IMR-90 (cell line): ENCODE measurements at regions of chr12 and their contacts with region 1.

Region 1: GRCh38 chr12:6533923-6534694 is at the start of gene GAPDH:
- DNase-seq: peak; percentile 97
- ATAC-seq: peak; percentile 51
- H3K4me3 ChIP-seq: peak within 1 kb of the TSS; percentile 66
- H3K27ac ChIP-seq: peak within 1 kb of the TSS; percentile 94
- H3K4me1 ChIP-seq: peaks cover 12% of the 10 kb centered on the region
- H3K27me3 ChIP-seq: no peaks in the 10 kb centered on the region
- CTCF ChIP-seq: 0 out of 2 replicates have a peak, but pooled peaks have one; percentile 3
- POLR2A ChIP-seq: peak; percentile 100
- RAD21 ChIP-seq: no peak
- total RNA-seq, gene GAPDH: 11,536 and 12,939 TPM in 2 replicates

Region 2: GRCh38 chr12:5554711-5555110 is 979.4 kb before region 1 on chr12:
- CTCF ChIA-PET with region 1: no interaction called
- POLR2A ChIA-PET with region 1: no interaction called
- dilution Hi-C with region 1: no loop called
- in situ Hi-C with region 1: no loop called
- intact Hi-C with region 1: no loop called
- DNase-seq: peak; percentile 58
- ATAC-seq: peak; percentile 64
- H3K4me3 ChIP-seq: no peak overlapping the region
- H3K27ac ChIP-seq: no peak overlapping the region
- H3K4me1 ChIP-seq: no peaks in the 10 kb centered on the region; the same call in 1 of the 2 replicates
- H3K27me3 ChIP-seq: peaks cover 11% of the 10 kb centered on the region
- CTCF ChIP-seq: no peak
- POLR2A ChIP-seq: no peak
- RAD21 ChIP-seq: no peak

Region 3: DNA sequence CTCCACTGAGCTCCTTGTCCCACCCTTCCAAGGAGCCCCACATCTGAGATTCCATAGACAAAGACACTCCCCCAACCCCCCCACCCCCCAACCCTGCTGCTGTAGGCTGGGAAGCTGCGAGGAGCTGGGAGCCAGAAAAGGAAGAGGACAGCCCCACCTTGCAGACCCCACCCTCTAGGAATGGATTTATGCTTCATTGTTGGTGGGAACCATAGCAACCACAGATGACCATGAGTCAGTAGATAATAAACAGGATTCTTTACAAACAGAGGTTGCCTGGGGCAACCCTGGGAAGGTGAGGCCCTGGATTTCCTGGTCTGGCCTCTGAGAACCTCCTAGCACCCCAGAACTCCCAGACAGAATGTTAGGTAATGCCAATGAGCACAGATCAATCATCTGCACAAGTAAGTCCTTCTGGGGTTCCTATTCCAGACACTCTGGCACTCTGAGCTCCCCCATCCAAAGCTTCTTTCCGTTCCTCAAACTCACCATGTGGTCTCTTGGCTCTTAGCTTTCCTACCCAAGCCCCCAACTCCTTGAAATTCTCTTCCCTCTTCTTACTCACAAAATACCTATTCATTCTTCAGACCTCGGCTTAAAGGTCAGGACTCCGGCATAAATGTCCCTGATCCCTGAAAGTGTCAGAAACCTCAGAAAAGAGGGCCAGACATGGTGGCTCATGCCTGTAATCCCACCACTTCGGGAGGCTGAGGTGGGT is 238.9 kb before region 1 on chr12:
- CTCF ChIA-PET with region 1: no interaction called
- POLR2A ChIA-PET with region 1: interaction called, 17 read pairs
- dilution Hi-C with region 1: no loop called
- in situ Hi-C with region 1: no loop called
- intact Hi-C with region 1: no loop called
- DNase-seq: peak; percentile 82
- ATAC-seq: peak; percentile 51
- H3K4me3 ChIP-seq: no peak overlapping the region
- H3K27ac ChIP-seq: no peak overlapping the region
- H3K4me1 ChIP-seq: peaks cover 24% of the 10 kb centered on the region
- H3K27me3 ChIP-seq: no peaks in the 10 kb centered on the region
- CTCF ChIP-seq: no peak
- POLR2A ChIP-seq: no peak
- RAD21 ChIP-seq: no peak

Region 4: DNA sequence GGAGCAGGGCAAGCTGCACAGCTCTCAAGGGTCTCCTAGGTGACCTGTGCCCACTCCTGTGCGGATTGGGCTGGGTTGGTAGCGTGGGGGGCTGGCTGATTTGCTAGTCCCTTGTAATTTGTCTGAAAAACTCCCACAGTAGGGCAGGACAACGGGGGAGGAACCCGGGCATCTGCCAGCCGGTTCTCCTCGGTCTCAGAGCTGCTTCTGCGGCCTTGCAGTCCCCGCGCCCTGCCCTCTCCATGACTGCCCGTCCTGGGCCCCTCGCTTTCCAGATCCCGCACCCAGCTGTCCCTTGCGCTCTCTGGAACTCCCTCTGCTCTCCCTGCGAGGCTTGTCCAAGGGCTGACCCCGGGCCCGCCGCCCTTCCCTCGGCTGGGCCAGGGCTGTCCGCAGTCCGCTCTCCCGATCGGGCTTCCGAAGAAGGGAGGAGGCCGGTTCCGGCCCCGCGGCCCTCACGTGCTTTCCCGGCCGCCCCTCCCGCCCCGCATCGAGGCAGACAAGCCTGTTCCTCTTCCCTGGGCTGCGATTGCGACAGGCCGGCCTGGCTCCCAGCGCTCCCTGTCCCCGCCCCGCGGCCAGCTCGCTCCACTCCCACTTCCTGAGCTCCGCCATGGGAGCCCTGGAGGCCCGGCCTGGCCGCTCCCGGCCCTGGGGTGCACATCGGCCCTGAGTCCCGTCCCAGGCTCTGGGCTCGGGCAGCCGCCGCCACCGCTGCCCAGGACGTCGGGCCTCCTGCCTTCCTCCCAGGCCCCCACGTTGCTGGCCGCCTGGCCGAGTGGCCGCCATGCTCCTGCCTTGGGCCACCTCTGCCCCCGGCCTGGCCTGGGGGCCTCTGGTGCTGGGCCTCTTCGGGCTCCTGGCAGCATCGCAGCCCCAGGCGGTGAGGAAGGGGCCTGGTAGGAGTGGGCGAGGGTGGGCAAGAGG is 150.3 kb before region 1 on chr12 and contains the start of gene LTBR:
- CTCF ChIA-PET with region 1: no interaction called
- POLR2A ChIA-PET with region 1: interaction called, 24 read pairs
- dilution Hi-C with region 1: no loop called
- in situ Hi-C with region 1: no loop called
- intact Hi-C with region 1: no loop called
- DNase-seq: peak; percentile 90
- ATAC-seq: peak; percentile 96
- H3K4me3 ChIP-seq: peak within 1 kb of the TSS; percentile 69
- H3K27ac ChIP-seq: peak within 1 kb of the TSS; percentile 94
- H3K4me1 ChIP-seq: peaks cover 20% of the 10 kb centered on the region
- H3K27me3 ChIP-seq: no peaks in the 10 kb centered on the region
- CTCF ChIP-seq: 0 out of 2 replicates have a peak, but pooled peaks have one; percentile 16
- POLR2A ChIP-seq: peak; percentile 79
- RAD21 ChIP-seq: peak; percentile 38
- total RNA-seq, gene LTBR: 19.7 and 24.7 TPM in 2 replicates

Region 5: GRCh38 chr12:6461401-6462233 is 72.5 kb before region 1 on chr12:
- CTCF ChIA-PET with region 1: no interaction called
- POLR2A ChIA-PET with region 1: interaction called, 20 read pairs
- dilution Hi-C with region 1: no loop called
- in situ Hi-C with region 1: no loop called
- intact Hi-C with region 1: no loop called
- DNase-seq: peak; percentile 45
- ATAC-seq: no peak
- H3K4me3 ChIP-seq: no peak overlapping the region
- H3K27ac ChIP-seq: no peak overlapping the region
- H3K4me1 ChIP-seq: no peaks in the 10 kb centered on the region
- H3K27me3 ChIP-seq: no peaks in the 10 kb centered on the region
- CTCF ChIP-seq: no peak
- POLR2A ChIP-seq: no peak
- RAD21 ChIP-seq: no peak

Region 6: DNA sequence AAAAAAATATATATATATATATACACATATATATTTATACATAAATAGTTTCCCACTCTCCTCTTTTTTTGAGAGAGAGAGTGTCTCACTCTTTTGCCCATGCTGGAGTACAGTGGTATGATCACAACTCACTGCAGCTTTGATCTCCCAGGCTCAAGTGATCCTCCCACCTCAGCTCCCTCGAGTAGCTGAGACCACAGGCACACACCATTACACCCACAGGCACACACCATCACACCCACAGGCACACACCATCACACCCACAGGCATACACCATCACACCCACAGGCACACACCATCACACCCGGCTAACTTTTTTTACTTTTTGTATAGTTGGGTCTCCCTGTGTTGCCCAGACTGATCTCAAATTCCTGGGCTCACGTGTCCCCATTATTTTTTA is 13.9 kb before region 1 on chr12:
- CTCF ChIA-PET with region 1: no interaction called
- POLR2A ChIA-PET with region 1: interaction called, 26 read pairs
- dilution Hi-C with region 1: no loop called
- in situ Hi-C with region 1: no loop called
- intact Hi-C with region 1: no loop called
- DNase-seq: no peak
- ATAC-seq: no peak
- H3K4me3 ChIP-seq: no peak overlapping the region
- H3K27ac ChIP-seq: no peak overlapping the region
- H3K4me1 ChIP-seq: no peaks in the 10 kb centered on the region
- H3K27me3 ChIP-seq: no peaks in the 10 kb centered on the region
- CTCF ChIP-seq: no peak
- POLR2A ChIP-seq: no peak
- RAD21 ChIP-seq: no peak

Region 7: GRCh38 chr12:6723607-6724396 is 189.7 kb after region 1 on chr12 and contains the start of gene COPS7A:
- CTCF ChIA-PET with region 1: no interaction called
- POLR2A ChIA-PET with region 1: interaction called, 12 read pairs
- dilution Hi-C with region 1: no loop called
- in situ Hi-C with region 1: no loop called
- intact Hi-C with region 1: no loop called
- DNase-seq: peak; percentile 98
- ATAC-seq: peak; percentile 99
- H3K4me3 ChIP-seq: peak within 1 kb of the TSS; percentile 51
- H3K27ac ChIP-seq: peak within 1 kb of the TSS; percentile 71
- H3K4me1 ChIP-seq: 0 out of 2 replicates have a peak, but pooled peaks cover 2% of the 10 kb centered on the region
- H3K27me3 ChIP-seq: no peaks in the 10 kb centered on the region
- CTCF ChIP-seq: no peak
- POLR2A ChIP-seq: peak; percentile 84
- RAD21 ChIP-seq: no peak
- total RNA-seq, gene COPS7A: 51.4 and 58.8 TPM in 2 replicates

Region 8: GRCh38 chr12:7005311-7005710 is 471.2 kb after region 1 on chr12:
- CTCF ChIA-PET with region 1: no interaction called
- POLR2A ChIA-PET with region 1: no interaction called
- dilution Hi-C with region 1: no loop called
- in situ Hi-C with region 1: no loop called
- intact Hi-C with region 1: no loop called
- DNase-seq: no peak
- ATAC-seq: no peak
- H3K4me3 ChIP-seq: no peak overlapping the region
- H3K27ac ChIP-seq: no peak overlapping the region
- H3K4me1 ChIP-seq: no peaks in the 10 kb centered on the region
- H3K27me3 ChIP-seq: no peaks in the 10 kb centered on the region
- CTCF ChIP-seq: no peak
- POLR2A ChIP-seq: no peak
- RAD21 ChIP-seq: no peak